ENCODE measurements at regions of chr11 and their contacts with region 1.

Region 1: GRCh38 chr11:44456544-44457300 is 108.7 kb upstream of the CD82 start:
- DNase-seq: no peak
- ATAC-seq: peak; percentile 91
- H3K4me3 ChIP-seq: no peak overlapping the region
- H3K27ac ChIP-seq: no peak overlapping the region
- H3K4me1 ChIP-seq: no peaks in the 10 kb centered on the region
- H3K27me3 ChIP-seq: no peaks in the 10 kb centered on the region
- CTCF ChIP-seq: peak; percentile 77

Region 2: DNA sequence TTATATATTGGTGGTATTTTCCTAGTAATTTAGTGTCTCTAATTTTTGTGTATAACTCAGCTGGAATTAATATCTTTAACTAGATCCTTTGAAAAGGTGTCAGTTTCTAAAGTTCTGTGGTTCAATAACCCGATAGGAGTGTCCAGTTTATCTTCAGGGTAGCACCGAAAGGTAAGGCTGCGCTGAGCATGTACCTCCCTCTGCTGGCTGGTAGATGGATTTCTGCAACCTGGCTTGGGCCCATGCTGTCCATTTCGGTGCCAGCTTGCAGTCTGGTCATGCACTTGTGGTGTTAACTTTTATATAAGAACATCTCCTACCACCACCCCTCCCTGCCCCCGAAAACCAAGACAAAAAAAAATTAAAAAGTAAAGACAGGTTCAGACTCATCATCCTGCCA is 336.6 kb before region 1 on chr11:
- CTCF ChIA-PET with region 1: interaction called, 6 read pairs
- POLR2A ChIA-PET with region 1: no interaction called
- in situ Hi-C with region 1: no loop called
- intact Hi-C with region 1: loop called (anchors 5 kb)
- DNase-seq: no peak
- ATAC-seq: peak; percentile 79
- H3K4me3 ChIP-seq: no peak overlapping the region
- H3K27ac ChIP-seq: no peak overlapping the region
- H3K4me1 ChIP-seq: no peaks in the 10 kb centered on the region
- H3K27me3 ChIP-seq: no peaks in the 10 kb centered on the region
- CTCF ChIP-seq: peak; percentile 64

Region 3: DNA sequence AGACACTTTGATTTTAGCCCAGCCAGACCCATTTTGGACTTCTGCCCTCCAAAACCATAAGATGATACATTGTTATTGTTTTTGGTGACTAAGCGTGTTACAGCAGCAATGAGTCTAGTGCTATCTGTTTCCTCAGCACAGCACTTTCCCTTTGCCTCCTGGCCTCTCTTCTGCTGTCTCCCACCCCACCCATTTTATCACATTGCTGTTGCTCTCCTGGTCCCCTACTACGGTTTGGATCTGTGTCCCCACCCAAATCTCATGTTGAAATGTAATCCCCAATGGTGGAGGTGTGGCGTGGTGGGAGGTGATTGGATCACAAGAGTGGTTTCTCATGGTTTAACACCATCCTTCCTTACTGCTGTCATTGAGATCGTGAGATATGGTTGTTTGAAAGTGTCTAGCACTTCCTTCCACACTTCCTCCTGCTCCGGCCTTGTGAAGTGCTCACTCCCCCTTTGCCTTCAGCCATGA is 48.9 kb after region 1 on chr11:
- CTCF ChIA-PET with region 1: no interaction called
- POLR2A ChIA-PET with region 1: no interaction called
- in situ Hi-C with region 1: no loop called
- intact Hi-C with region 1: loop called (anchors 2 kb)
- DNase-seq: no peak
- ATAC-seq: no peak
- H3K4me3 ChIP-seq: no peak overlapping the region
- H3K27ac ChIP-seq: no peak overlapping the region
- H3K4me1 ChIP-seq: peaks cover 13% of the 10 kb centered on the region
- H3K27me3 ChIP-seq: peaks cover under 1% of the 10 kb centered on the region; the same call in 1 of the 2 replicates
- CTCF ChIP-seq: no peak